ENCODE measurements at regions of chr1 and their contacts with region 1.

Region 1: GRCh38 chr1:1826356-1827088 is 48.3 kb upstream of the NADK start:
- DNase-seq: no peak
- ATAC-seq: no peak
- H3K4me3 ChIP-seq: no peak overlapping the region
- H3K27ac ChIP-seq: peak overlapping the region in 1 of 12 donors; percentile 3
- H3K4me1 ChIP-seq: peaks cover 0 to 17% (median 9%) of the 10 kb centered on the region in 12 donors
- H3K27me3 ChIP-seq: no peaks in the 10 kb centered on the region
- CTCF ChIP-seq: no peak
- POLR2A ChIP-seq: no peak

Region 2: DNA sequence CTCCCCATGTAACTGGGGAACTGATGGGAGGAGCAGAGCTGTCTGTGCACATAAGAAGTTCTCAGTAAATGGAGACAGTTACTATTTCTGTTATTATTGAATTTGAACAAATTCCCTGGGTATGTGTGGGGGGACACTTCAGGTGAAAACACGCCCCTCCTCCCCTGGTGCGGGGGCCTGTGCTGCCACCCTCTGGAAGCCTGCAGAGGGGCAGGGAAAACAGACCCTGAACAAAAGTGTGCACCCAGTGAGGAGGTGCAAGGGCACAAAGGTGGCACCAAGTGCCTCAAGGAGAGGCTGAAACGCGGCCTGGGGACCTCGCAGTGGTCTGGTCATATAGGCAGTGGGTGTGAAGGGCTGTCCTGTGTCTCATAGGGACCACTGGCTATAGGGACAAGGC is 30.1 kb before region 1 on chr1:
- intact Hi-C with region 1: loop called in 1 of 10 experiments (anchors 5 kb)
- DNase-seq: peak in 1 of 5 donors; percentile 30
- ATAC-seq: no peak
- H3K4me3 ChIP-seq: no peak overlapping the region
- H3K27ac ChIP-seq: no peak overlapping the region
- H3K4me1 ChIP-seq: peaks cover 0 to 18% (median 10%) of the 10 kb centered on the region in 12 donors
- H3K27me3 ChIP-seq: no peaks in the 10 kb centered on the region
- CTCF ChIP-seq: peak in 6 of 12 donors; percentile 6 to 24 (median 18)
- POLR2A ChIP-seq: no peak

Measured in heart left ventricle (tissue), 16 donors.